Cardiac septum (tissue), 1 donor: ENCODE measurements at regions of chr15 and their contacts with region 1.

Region 1: GRCh38 chr15:71443538-71443937 is 328.3 kb downstream of the THSD4 start:
- DNase-seq: no peak

Region 2: DNA sequence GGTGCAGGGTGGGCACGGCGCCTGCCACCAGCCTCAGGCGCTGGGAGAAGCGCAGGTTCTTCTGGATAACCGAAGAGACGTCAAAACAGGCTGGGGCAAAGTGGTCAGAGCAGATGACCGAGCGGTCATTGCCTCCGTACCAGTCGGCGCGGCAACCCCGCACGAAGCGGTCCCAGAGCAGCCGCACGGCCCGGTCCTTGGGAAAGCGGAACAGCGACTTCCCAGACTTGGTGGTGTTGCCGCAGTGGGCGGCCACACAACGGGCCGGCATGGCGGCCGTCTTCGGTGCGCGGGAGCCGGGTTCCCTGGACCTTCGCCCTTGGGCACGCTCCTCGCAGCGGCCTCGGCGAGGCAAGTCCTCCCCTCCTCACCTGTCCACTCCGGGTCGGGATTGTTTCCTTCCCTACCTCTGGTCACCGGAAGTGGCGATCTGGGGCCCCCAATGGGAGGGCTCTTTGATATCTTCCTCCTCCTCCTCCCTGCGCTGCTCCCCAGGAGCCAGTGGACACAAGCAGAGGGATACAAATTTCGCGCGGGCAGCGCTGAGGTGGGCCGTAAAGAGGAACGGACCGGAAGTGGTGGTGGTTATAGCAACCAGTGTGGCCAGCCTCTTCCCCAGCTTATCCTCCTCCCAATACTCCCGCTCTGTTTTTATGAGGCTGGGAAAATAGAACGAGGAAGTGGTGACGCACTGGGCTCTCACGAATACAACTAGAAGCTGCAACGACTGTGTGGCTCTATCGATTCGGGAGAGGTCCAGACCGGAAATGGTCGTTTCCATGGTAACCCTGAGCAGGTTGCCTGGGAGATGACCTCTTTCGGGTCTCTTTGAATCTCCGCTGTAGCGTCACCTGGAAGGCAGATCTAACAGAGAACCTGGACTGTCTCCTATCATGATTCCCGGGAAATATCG is 551.3 kb before region 1 on chr15 and contains the starts of genes LRRC49 and THAP10:
- intact Hi-C with region 1: loop called (anchors 5 kb)
- DNase-seq: peak; percentile 88
- total RNA-seq, gene LRRC49: 83.2 TPM
- total RNA-seq, gene THAP10: 3.5 TPM

Region 3: GRCh38 chr15:71008250-71008870 is 435.2 kb before region 1 on chr15:
- intact Hi-C with region 1: loop called (anchors 2 kb)
- DNase-seq: no peak

Region 4: GRCh38 chr15:71114896-71115554 is 328.5 kb before region 1 on chr15 and contains the start of gene THSD4:
- intact Hi-C with region 1: loop called (anchors 2 kb)
- DNase-seq: peak; percentile 83
- total RNA-seq, gene THSD4: 116 TPM

Region 5: DNA sequence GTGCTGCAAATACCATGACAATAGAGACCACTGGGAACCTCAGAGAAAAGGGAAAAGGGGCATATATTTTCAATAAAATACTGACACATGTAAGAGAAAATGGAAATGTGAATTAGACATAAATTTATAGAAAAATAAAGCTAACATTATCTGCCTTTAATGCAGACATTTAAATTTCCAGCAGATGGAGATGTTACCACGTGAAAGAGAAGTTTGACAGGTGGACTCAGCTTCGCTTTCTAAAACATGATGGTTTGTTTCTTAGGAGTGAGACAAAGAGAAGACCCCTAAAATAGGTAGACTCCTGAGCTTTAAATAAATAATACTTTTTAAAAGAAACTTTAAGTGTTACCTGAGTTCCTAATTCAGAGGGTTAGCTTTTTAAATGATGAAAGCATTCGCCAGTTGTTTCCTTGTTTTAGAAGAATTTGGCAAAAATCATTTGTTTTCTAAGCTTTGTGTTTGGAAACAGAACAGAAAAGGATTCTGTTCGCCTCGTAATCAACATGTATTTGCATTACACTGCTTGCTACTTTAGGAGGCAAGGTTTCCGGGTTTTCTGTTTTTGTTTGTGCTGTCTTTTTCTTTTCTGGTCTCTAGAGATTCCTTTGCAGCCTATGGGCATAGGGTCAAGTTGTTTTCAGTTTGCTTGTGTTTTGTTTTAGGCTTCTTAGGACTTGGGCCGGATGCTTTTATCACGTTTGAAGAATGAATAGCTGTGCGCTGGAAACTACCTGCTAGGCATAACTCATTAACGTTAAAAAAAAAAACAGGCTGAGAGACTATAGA is 56.9 kb before region 1 on chr15:
- intact Hi-C with region 1: loop called (anchors 5 kb)
- DNase-seq: no peak

Region 6: DNA sequence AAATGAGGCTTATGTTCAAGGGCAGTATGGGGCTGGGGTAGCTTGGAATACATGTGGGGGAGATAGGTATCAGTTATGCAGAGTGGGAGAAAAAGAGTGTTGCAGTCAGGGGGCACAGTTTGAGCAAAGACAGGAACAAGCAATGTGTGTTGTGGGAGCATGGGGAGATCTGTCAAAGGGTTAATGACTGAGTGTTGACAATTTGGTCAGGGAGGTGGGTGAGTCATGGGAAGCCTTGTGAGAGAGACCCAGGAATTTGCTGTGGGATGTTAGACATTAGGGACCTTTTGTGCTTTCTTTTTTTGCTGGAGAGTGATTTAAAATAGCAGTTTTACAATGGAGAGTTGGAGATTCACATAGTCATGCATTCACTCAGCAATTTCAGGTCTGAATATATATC is 145.2 kb after region 1 on chr15:
- intact Hi-C with region 1: no loop called
- DNase-seq: no peak

Region 7: GRCh38 chr15:71800835-71801745 is 357.6 kb after region 1 on chr15:
- intact Hi-C with region 1: loop called (anchors 5 kb)
- DNase-seq: no peak